Dendritic cell treated with granulocyte-macrophage colony-stimulating factor and Interleukin-4, amounts not matched to agents 40 ng/mL and 50 ng/mL, for 4 days (primary cell): ENCODE measurements at regions of chr10 and their contacts with region 1.

Region 1: DNA sequence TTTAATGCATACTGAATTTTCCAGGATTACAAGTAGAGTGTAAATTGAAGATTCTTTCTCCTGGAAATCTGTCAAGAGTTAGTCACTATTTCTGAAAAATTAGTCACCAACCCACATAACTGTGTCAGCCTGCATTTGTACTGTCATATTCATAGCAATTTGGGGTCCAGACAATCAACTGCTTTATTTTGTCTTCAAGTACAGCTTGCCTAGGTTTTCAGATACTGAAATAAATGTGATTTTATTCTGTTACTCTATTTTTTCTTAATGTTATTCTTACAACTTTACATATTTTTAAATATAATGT is 55.1 kb downstream of the CUBN start:
- H3K4me3 Mint-ChIP-seq: no peak overlapping the region
- H3K27ac Mint-ChIP-seq: peak overlapping the region; percentile 37
- H3K4me1 Mint-ChIP-seq: peaks cover 25% of the 10 kb centered on the region
- H3K27me3 Mint-ChIP-seq: no peaks in the 10 kb centered on the region

Region 2: DNA sequence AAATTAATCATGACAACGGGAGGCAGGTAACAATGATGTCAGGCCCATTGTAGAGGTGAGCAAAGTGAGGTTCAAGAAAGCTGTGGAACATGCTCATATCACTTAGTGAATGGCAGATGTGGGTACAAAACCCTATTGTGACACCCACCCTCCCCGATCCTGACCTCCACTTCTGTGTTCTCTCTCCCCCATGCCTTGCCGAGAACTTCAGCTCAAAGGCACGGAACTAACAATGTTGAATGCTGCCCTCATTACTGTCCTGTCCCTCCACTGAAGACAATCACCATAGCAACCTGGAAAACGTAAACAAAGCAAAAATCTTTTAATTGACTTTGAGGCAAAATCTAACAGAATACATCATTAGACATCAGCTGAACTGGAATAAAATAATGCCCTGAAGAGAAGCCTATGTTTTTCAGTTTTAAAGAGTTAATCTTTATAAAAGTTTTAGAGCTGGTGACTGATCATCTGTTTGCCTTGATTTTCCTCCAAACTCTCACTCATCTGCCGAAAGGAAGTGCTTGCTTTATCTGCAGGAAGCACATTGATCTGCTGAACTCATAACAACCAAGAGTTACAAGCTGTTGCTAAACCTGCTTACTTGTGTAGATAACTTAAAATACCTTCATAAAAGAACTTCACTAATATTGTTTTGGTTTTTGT is 78.5 kb before region 1 on chr10:
- intact Hi-C with region 1: no loop called
- H3K4me3 Mint-ChIP-seq: no peak overlapping the region
- H3K27ac Mint-ChIP-seq: no peak overlapping the region
- H3K4me1 Mint-ChIP-seq: peaks cover 12% of the 10 kb centered on the region
- H3K27me3 Mint-ChIP-seq: no peaks in the 10 kb centered on the region

Region 3: GRCh38 chr10:17038627-17039026 is 35.9 kb before region 1 on chr10:
- intact Hi-C with region 1: loop called (anchors 5 kb)
- H3K4me3 Mint-ChIP-seq: no peak overlapping the region
- H3K27ac Mint-ChIP-seq: no peak overlapping the region
- H3K4me1 Mint-ChIP-seq: peaks cover 15% of the 10 kb centered on the region
- H3K27me3 Mint-ChIP-seq: no peaks in the 10 kb centered on the region

Region 4: DNA sequence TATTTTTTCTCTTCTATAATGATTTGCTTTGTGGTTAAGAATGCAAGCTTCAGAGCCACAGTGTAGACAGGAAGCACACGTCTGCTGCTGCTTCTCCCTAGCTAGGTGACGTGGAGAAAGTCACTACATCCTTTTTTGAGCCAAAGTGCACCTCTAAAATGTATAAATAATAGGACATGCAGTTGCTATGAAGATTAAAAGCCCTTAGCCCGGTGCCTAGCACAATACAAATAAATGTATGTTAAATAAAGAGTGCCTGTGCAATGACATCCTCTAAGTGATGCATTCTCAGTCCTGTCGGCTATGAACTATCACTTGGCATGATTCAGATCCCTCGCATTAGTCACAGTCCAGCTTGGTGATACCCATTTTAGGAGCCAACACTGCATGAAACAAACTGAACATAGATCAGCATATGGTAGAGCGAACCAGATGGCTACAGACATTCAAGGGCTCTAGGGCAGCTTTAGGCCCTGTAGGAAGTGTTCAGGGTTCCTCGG is 131.8 kb after region 1 on chr10:
- intact Hi-C with region 1: no loop called
- H3K4me3 Mint-ChIP-seq: no peak overlapping the region
- H3K27ac Mint-ChIP-seq: peak overlapping the region; percentile 79
- H3K4me1 Mint-ChIP-seq: peaks cover 56% of the 10 kb centered on the region
- H3K27me3 Mint-ChIP-seq: no peaks in the 10 kb centered on the region

Region 5: DNA sequence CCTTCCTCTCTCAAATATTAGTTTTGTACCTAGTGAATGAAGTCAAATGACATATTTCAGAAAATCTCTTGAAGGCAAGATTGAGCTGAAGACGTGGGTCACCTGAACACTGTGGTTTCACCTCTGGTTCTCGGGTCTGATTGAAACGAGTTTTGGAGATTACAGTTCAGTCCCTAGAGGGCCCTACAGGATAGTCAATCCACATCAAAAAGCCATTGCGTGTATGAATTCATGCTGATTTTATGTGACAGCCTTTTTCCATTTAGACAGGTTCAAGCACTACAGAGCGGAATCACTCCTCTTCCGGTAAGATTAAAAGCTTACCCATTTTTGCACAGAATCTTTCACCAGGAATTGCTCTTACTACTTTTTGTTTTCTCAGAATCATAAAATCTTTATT is 215.7 kb after region 1 on chr10:
- intact Hi-C with region 1: no loop called
- H3K4me3 Mint-ChIP-seq: no peak overlapping the region
- H3K27ac Mint-ChIP-seq: no peak overlapping the region
- H3K4me1 Mint-ChIP-seq: no peaks in the 10 kb centered on the region
- H3K27me3 Mint-ChIP-seq: peaks cover 14% of the 10 kb centered on the region